MCF 10A (cell line): ENCODE measurements at regions of chr5 and their contacts with region 1.

Region 1: DNA sequence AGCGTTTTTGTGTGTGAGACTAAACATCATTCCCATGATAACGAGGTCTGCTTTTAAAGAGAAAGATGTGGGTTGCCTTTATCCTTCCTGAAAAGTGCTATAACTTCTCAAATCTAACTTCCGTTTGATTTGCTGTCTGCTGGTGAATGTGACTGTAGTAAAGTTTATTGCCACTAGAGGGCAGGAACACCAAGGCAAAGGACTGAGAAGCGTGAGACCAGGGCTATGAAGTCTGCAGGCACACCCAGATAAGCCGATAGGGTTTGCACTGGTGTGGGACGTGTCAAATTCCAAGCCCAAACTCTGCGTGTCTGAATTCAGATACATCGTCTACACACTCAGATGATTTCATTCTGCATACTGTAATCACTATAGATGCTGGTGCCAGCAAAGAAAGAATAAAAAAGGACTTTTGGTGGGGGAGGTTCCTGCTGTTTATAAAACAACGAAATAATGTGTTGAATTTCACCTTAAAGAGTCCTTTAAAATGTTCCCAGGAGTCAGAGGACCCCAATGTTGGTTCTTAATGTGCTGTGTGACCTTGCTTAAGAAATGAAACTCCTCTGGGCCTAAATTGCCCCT is 87.2 kb downstream of the PTTG1 start:
- DNase-seq: peak; percentile 86
- H3K4me3 Mint-ChIP-seq: no peak overlapping the region
- H3K27ac Mint-ChIP-seq: no peak overlapping the region
- H3K4me1 Mint-ChIP-seq: peaks cover 5% of the 10 kb centered on the region
- H3K27me3 Mint-ChIP-seq: peaks cover 21% of the 10 kb centered on the region
- CTCF ChIP-seq: peak; percentile 96

Region 2: GRCh38 chr5:160525471-160526261 is 16.8 kb after region 1 on chr5:
- CTCF ChIA-PET with region 1: interaction called, 15 read pairs
- POLR2A ChIA-PET with region 1: no interaction called
- intact Hi-C with region 1: no loop called
- DNase-seq: no peak
- H3K4me3 Mint-ChIP-seq: no peak overlapping the region
- H3K27ac Mint-ChIP-seq: no peak overlapping the region
- H3K4me1 Mint-ChIP-seq: peaks cover 7% of the 10 kb centered on the region
- H3K27me3 Mint-ChIP-seq: peaks cover 11% of the 10 kb centered on the region
- CTCF ChIP-seq: no peak

Region 3: DNA sequence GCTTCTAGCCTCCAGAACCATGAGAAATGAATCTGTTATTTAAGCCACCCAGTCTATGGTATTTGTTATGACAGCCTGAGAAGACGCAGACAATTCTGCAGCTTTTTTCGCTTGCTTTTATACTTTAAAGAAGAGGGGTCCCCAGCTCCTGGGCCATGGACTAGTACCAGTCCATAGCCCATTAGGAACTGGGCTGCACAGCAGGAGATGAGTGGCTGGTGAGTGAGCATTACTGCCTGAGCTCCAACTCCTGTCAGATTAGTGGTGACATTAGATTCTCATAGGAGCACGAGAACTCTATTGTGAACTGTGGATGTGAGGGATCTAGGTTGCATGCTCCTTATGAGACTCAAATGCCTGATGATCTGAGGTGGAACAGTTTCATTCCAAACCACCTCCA is 64.4 kb after region 1 on chr5:
- CTCF ChIA-PET with region 1: no interaction called
- POLR2A ChIA-PET with region 1: no interaction called
- intact Hi-C with region 1: no loop called
- DNase-seq: no peak
- H3K4me3 Mint-ChIP-seq: no peak overlapping the region
- H3K27ac Mint-ChIP-seq: no peak overlapping the region
- H3K4me1 Mint-ChIP-seq: no peaks in the 10 kb centered on the region
- H3K27me3 Mint-ChIP-seq: peaks cover 27% of the 10 kb centered on the region
- CTCF ChIP-seq: no peak

Region 4: DNA sequence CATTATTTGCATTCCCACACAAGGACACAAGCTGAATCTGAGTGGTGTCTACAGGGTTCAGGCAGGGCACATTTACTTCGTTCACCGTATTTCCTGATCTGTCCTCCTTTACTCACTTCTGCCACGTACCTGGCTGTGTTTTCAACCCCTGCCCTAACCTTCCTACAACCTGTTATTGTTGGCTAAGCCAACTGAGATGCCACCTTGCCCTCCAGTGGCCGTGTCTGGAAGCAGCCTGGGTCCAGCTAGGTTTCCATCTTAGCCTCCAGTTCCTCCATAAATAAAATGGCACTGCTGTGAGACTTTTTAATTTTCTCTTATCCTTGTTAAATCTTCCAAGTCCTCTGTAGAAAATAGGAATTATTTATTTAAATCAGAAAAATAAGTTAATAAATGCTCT is 278.4 kb after region 1 on chr5:
- CTCF ChIA-PET with region 1: interaction called, 23 read pairs
- POLR2A ChIA-PET with region 1: no interaction called
- intact Hi-C with region 1: loop called (anchors 1 kb)
- DNase-seq: peak; percentile 57
- H3K4me3 Mint-ChIP-seq: no peak overlapping the region
- H3K27ac Mint-ChIP-seq: no peak overlapping the region
- H3K4me1 Mint-ChIP-seq: peaks cover 6% of the 10 kb centered on the region
- H3K27me3 Mint-ChIP-seq: no peaks in the 10 kb centered on the region
- CTCF ChIP-seq: peak; percentile 38

Region 5: GRCh38 chr5:161535762-161536161 is 1026.9 kb after region 1 on chr5:
- CTCF ChIA-PET with region 1: interaction called, 4 read pairs
- POLR2A ChIA-PET with region 1: no interaction called
- intact Hi-C with region 1: loop called (anchors 2 kb)
- DNase-seq: peak; percentile 24
- H3K4me3 Mint-ChIP-seq: no peak overlapping the region
- H3K27ac Mint-ChIP-seq: no peak overlapping the region
- H3K4me1 Mint-ChIP-seq: no peaks in the 10 kb centered on the region
- H3K27me3 Mint-ChIP-seq: peaks cover 72% of the 10 kb centered on the region
- CTCF ChIP-seq: peak; percentile 28

Region 6: DNA sequence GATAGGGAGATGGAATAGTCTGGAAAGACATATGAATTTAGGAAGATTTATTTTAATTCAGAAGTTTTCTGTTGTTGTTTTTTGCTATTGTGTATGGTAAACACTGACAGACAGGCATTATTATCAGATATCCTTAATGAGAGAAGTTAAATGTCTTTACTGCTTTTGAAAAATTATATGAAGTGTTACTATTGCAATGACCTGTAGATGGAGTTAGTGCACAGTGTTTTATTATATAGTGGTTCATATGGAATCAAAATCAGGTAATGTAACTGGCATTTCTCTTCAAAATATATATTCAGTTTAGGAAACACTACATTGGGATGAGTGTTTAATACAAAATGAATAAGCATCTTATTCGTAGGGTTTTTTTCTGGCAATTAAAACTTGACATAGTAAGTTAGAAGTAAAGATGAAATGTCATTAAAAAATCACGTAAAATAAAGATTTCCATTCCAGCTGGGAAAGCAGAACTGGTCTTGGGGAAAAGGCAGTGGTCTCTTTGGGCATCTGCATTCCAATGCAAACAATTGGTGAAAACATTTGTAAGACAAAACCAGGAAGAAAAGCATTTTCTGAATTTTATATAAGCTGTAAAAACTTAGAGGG is 1342.9 kb after region 1 on chr5:
- CTCF ChIA-PET with region 1: interaction called, 3 read pairs
- POLR2A ChIA-PET with region 1: no interaction called
- intact Hi-C with region 1: loop called (anchors 2 kb)
- DNase-seq: peak; percentile 30
- H3K4me3 Mint-ChIP-seq: no peak overlapping the region
- H3K27ac Mint-ChIP-seq: no peak overlapping the region
- H3K4me1 Mint-ChIP-seq: no peaks in the 10 kb centered on the region
- H3K27me3 Mint-ChIP-seq: peaks cover 79% of the 10 kb centered on the region
- CTCF ChIP-seq: peak; percentile 45